HCT116 (cell line): ENCODE measurements at regions of chr19 and their contacts with region 1.

Region 1: DNA sequence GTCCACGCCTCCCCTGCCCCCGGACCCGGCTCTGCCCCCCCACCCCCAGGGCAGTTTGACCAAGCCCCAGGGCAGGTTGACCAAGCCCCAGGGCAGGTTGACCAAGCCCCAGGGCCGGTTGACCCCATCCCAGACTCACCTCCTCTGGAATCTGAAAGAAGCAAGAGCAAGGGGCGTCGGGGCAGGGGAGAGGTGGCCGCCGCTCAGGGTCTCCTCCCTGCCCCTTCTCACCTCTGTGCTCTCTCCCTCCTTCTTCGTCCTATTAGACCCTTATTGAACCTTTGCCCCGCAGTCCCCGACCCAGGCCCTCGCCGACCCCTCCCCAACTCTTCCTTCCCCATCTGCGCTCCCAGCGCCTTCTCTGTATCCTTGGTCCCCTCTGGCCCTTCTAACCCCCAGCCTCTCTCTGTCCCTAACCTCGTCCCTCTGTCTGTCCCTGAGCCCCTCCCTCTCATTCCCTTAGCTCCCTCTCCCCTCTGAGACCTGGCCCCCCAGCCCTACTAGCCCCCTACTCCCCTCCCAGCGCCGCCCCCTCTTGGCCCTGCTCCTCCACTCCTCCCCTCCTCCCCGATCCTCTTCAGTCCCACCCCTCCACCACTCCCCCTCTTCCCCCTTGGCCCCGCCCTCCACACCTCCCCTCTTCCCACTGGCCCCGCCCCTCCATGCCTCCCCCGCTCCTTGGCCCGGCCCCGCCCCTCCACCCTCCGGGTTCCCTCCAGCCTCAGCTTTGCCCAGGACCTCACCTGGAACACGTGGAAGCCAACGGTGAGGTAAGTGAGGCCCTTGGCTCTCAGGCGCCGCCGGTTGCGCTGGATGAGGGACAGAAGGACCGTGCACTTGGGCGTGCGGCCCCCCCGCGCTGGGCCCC is 7.6 kb downstream of the CAPN12 start:
- DNase-seq: peak; percentile 48
- ATAC-seq: peak; percentile 41
- H3K4me3 ChIP-seq: peak overlapping the region; percentile 32 to 50
- H3K27ac ChIP-seq: no peak overlapping the region; the same call in 1 of the 2 replicates
- H3K4me1 ChIP-seq: peaks cover 13 to 49% of the 10 kb centered on the region in 2 experiments; a peak in 3 of 4 replicates
- H3K27me3 ChIP-seq: no peaks in the 10 kb centered on the region
- CTCF ChIP-seq: no peak
- POLR2A ChIP-seq: no peak
- RAD21 ChIP-seq: no peak

Region 2: DNA sequence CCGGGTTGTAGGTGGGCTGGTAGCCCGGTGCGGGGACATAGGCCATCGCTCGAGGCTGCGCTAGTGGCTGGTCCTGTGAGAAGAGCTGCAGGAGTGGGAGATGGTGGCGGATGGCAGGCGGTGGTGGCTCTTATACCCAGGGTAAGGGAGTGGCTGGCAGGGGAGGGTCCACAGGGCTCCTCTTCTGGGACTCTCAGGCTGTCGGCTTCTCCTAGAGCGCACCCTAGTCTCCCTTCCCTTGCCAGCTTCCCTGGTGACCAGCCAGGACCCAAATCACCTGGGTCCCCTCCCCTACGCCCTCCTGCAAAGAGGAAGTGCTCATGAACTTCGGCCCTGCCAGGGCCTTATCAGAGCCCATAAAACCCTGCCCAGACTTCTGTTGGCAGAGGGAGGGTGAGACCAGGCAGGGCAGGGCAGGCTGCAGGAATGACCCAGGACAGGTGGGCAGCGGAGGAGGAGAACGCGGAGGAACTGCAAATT is 76.2 kb after region 1 on chr19 and contains the start of gene LGALS4:
- CTCF ChIA-PET with region 1: no interaction called
- POLR2A ChIA-PET with region 1: no interaction called
- RAD21 ChIA-PET with region 1: no interaction called
- intact Hi-C with region 1: no loop called
- DNase-seq: no peak
- ATAC-seq: no peak
- H3K4me3 ChIP-seq: no peak within 1 kb of the TSS
- H3K27ac ChIP-seq: no peak within 1 kb of the TSS
- H3K4me1 ChIP-seq: no peaks in the 10 kb centered on the region
- H3K27me3 ChIP-seq: no peaks in the 10 kb centered on the region
- CTCF ChIP-seq: no peak
- POLR2A ChIP-seq: no peak
- RAD21 ChIP-seq: no peak
- total RNA-seq, gene LGALS4: 0.86 TPM

Region 3: GRCh38 chr19:38831142-38831605 is 94.5 kb after region 1 on chr19:
- CTCF ChIA-PET with region 1: no interaction called
- POLR2A ChIA-PET with region 1: no interaction called
- RAD21 ChIA-PET with region 1: no interaction called
- intact Hi-C with region 1: loop called (anchors 5 kb)
- DNase-seq: no peak
- ATAC-seq: peak; percentile 53
- H3K4me3 ChIP-seq: peak overlapping the region; percentile 61 to 68
- H3K27ac ChIP-seq: peak overlapping the region; percentile 66
- H3K4me1 ChIP-seq: peaks cover 2 to 16% of the 10 kb centered on the region in 2 experiments; a peak in 3 of 4 replicates
- H3K27me3 ChIP-seq: no peaks in the 10 kb centered on the region
- CTCF ChIP-seq: no peak
- POLR2A ChIP-seq: no peak
- RAD21 ChIP-seq: no peak